ENCODE measurements at regions of chr9 and their contacts with region 1.

Region 1: GRCh38 chr9:101449140-101449721 is 13.7 kb upstream of the ALDOB start:
- DNase-seq: peak; percentile 44 to 92
- H3K4me3 ChIP-seq: peak overlapping the region; percentile 53 to 83 (median 67)
- H3K27ac ChIP-seq: no peak overlapping the region
- H3K4me1 ChIP-seq: no peaks in the 10 kb centered on the region; a peak in 1 of 7 replicates
- H3K27me3 ChIP-seq: no peaks in the 10 kb centered on the region
- CTCF ChIP-seq: peak; percentile 87 to 93 (median 87)
- EP300 ChIP-seq: no peak
- POLR2A ChIP-seq: 0 out of 3 replicates have a peak, but pooled peaks of 1 of the 2 experiments have one; percentile 33
- RAD21 ChIP-seq: peak; percentile 67 to 70

Region 2: GRCh38 chr9:101119206-101119819 is 329.9 kb before region 1 on chr9:
- CTCF ChIA-PET with region 1: no interaction called
- POLR2A ChIA-PET with region 1: no interaction called
- DNase-seq: peak in 1 of 2 experiments; percentile 92
- H3K4me3 ChIP-seq: no peak overlapping the region
- H3K27ac ChIP-seq: no peak overlapping the region
- H3K4me1 ChIP-seq: peaks cover 0 to 7% (median 3%) of the 10 kb centered on the region in 4 experiments; a peak in 4 of 7 replicates
- H3K27me3 ChIP-seq: no peaks in the 10 kb centered on the region
- CTCF ChIP-seq: peak; percentile 96 to 99 (median 98)
- EP300 ChIP-seq: no peak
- POLR2A ChIP-seq: no peak
- RAD21 ChIP-seq: peak; percentile 96 to 99

Region 3: GRCh38 chr9:101437806-101438232 is 11.4 kb before region 1 on chr9:
- CTCF ChIA-PET with region 1: interaction called, 16 read pairs
- POLR2A ChIA-PET with region 1: no interaction called
- DNase-seq: no peak
- H3K4me3 ChIP-seq: no peak overlapping the region
- H3K27ac ChIP-seq: no peak overlapping the region
- H3K4me1 ChIP-seq: no peaks in the 10 kb centered on the region
- H3K27me3 ChIP-seq: no peaks in the 10 kb centered on the region
- CTCF ChIP-seq: no peak
- EP300 ChIP-seq: no peak
- POLR2A ChIP-seq: no peak
- RAD21 ChIP-seq: no peak

Region 4: GRCh38 chr9:101486693-101487442 is 37.6 kb after region 1 on chr9:
- CTCF ChIA-PET with region 1: interaction called, 13 read pairs
- POLR2A ChIA-PET with region 1: interaction called, 3 read pairs
- DNase-seq: peak; percentile 72 to 87
- H3K4me3 ChIP-seq: peak overlapping the region; percentile 70 to 87 (median 74)
- H3K27ac ChIP-seq: peak overlapping the region; percentile 25; the same call in 1 of the 2 replicates
- H3K4me1 ChIP-seq: peaks cover 5 to 9% (median 7%) of the 10 kb centered on the region in 4 experiments; a peak in 6 of 7 replicates
- H3K27me3 ChIP-seq: peaks cover 0 to 5% (median 2%) of the 10 kb centered on the region in 4 experiments; a peak in 5 of 7 replicates
- CTCF ChIP-seq: peak; percentile 61 to 70 (median 67)
- EP300 ChIP-seq: no peak
- POLR2A ChIP-seq: peak; percentile 17 to 60; a peak in 2 of 3 replicates
- RAD21 ChIP-seq: peak; percentile 67 to 72

Region 5: DNA sequence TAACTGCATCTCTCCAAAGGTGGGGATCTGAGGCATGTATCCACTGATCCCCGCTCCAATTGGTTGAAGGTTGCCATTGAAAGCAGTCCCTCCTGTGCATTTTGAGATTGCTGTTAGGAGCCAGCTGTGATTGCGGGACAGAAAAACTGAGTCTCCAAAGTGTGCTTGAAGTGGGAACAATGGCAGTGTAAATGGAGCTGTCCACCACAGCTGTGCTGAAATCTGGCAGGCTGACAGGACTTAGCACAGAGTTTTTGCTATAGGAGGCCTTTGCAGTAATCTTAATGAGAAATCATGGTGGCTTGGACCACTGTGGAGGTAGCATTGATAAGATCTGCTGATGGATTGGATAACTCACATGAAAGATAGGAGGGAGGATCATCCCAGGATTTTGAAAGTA is 87.7 kb after region 1 on chr9:
- CTCF ChIA-PET with region 1: interaction called, 16 read pairs
- POLR2A ChIA-PET with region 1: interaction called, 3 read pairs
- DNase-seq: no peak
- H3K4me3 ChIP-seq: no peak overlapping the region
- H3K27ac ChIP-seq: no peak overlapping the region
- H3K4me1 ChIP-seq: no peaks in the 10 kb centered on the region
- H3K27me3 ChIP-seq: no peaks in the 10 kb centered on the region
- CTCF ChIP-seq: no peak
- EP300 ChIP-seq: no peak
- POLR2A ChIP-seq: no peak
- RAD21 ChIP-seq: no peak

Region 6: DNA sequence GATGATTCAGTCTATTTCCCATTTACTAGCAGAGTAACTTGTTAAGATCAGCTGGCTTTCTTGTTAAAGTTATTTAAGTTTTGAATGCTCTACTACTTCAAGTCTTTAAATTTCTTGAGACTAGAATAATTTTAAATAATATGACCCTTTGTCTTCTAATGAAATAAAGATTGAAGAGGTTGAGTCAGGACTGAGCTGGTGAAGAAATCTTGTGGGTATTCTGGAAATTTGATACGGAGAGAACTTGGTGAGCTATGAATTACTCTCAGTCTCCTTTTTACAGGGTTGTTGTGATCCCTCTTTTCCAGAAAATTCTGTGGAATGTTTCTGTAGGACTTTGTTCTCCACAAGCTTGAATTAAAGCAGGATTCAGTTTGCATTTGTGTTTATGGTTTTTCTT is 113.7 kb after region 1 on chr9:
- CTCF ChIA-PET with region 1: interaction called, 13 read pairs
- POLR2A ChIA-PET with region 1: no interaction called
- DNase-seq: no peak
- H3K4me3 ChIP-seq: no peak overlapping the region
- H3K27ac ChIP-seq: no peak overlapping the region
- H3K4me1 ChIP-seq: no peaks in the 10 kb centered on the region
- H3K27me3 ChIP-seq: no peaks in the 10 kb centered on the region
- CTCF ChIP-seq: no peak
- EP300 ChIP-seq: no peak
- POLR2A ChIP-seq: no peak
- RAD21 ChIP-seq: no peak